ENCODE measurements at regions of chr3 and their contacts with region 1.

Region 1: GRCh38 chr3:15405448-15406050 is 21.8 kb downstream of the METTL6 start:
- DNase-seq: peak; percentile 69 to 71
- ATAC-seq: peak; percentile 73 to 90; a peak in 5 of 6 replicates
- H3K4me3 ChIP-seq: no peak overlapping the region
- H3K27ac ChIP-seq: no peak overlapping the region
- H3K4me1 ChIP-seq: no peaks in the 10 kb centered on the region
- CTCF ChIP-seq: peak; percentile 78
- EP300 ChIP-seq: no peak
- POLR2A ChIP-seq: no peak
- RAD21 ChIP-seq: peak; percentile 62 to 68

Region 2: GRCh38 chr3:15241341-15241740 is 164.2 kb before region 1 on chr3:
- CTCF ChIA-PET with region 1: no interaction called
- POLR2A ChIA-PET with region 1: no interaction called
- DNase-seq: peak; percentile 28 to 32
- ATAC-seq: peak; percentile 73 to 83; a peak in 5 of 6 replicates
- H3K4me3 ChIP-seq: no peak overlapping the region
- H3K27ac ChIP-seq: no peak overlapping the region
- H3K4me1 ChIP-seq: no peaks in the 10 kb centered on the region
- CTCF ChIP-seq: peak; percentile 23; the same call in 1 of the 3 replicates
- EP300 ChIP-seq: no peak
- POLR2A ChIP-seq: no peak
- RAD21 ChIP-seq: peak in 1 of 2 experiments; percentile 40; a peak in 2 of 5 replicates

Region 3: DNA sequence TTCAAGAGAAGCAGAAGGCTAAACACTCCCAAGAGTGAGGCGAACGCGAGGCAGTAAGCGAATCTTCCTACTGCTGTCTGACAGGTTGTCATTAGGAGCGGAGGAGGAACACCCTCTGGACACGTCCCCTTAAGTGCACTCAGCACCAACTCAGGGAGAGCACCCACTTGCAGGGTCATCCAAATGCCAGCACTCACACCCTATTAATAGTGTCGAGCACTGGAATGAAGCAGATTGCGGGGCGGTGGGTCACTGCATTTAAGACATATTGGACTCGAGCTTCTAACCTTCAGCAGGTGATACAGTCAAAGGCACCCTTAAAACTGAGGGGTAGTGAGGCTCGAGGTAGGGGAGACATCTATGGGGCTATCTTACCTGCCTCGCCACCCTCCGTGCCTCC is 101.8 kb before region 1 on chr3:
- CTCF ChIA-PET with region 1: no interaction called
- POLR2A ChIA-PET with region 1: no interaction called
- DNase-seq: no peak
- ATAC-seq: no peak
- H3K4me3 ChIP-seq: no peak overlapping the region
- H3K27ac ChIP-seq: no peak overlapping the region
- H3K4me1 ChIP-seq: peaks cover 20% of the 10 kb centered on the region
- CTCF ChIP-seq: no peak
- EP300 ChIP-seq: no peak
- POLR2A ChIP-seq: no peak
- RAD21 ChIP-seq: no peak

Region 4: GRCh38 chr3:15384510-15385237 is 20.9 kb before region 1 on chr3:
- CTCF ChIA-PET with region 1: interaction called, 20 read pairs
- POLR2A ChIA-PET with region 1: interaction called, 4 read pairs
- DNase-seq: no peak
- ATAC-seq: no peak
- H3K4me3 ChIP-seq: no peak overlapping the region
- H3K27ac ChIP-seq: no peak overlapping the region
- H3K4me1 ChIP-seq: no peaks in the 10 kb centered on the region
- CTCF ChIP-seq: no peak
- EP300 ChIP-seq: no peak
- POLR2A ChIP-seq: no peak
- RAD21 ChIP-seq: no peak

Region 5: GRCh38 chr3:15427182-15427880 is 21.8 kb after region 1 on chr3 and contains the starts of genes EAF1 and METTL6:
- CTCF ChIA-PET with region 1: interaction called, 11 read pairs
- POLR2A ChIA-PET with region 1: no interaction called
- DNase-seq: peak; percentile 85 to 94
- ATAC-seq: peak; percentile 97 to 99
- H3K4me3 ChIP-seq: peak within 1 kb of the TSS; percentile 84
- H3K27ac ChIP-seq: peak within 1 kb of the TSS; percentile 81 to 95
- H3K4me1 ChIP-seq: peaks cover 21% of the 10 kb centered on the region; the same call in 2 of the 3 replicates
- CTCF ChIP-seq: no peak
- EP300 ChIP-seq: no peak
- POLR2A ChIP-seq: peak; percentile 49
- RAD21 ChIP-seq: no peak
- polyA plus RNA-seq, gene EAF1: 18.6 and 20.7 TPM in 2 replicates
- polyA plus RNA-seq, gene METTL6: 37.4 and 42.7 TPM in 2 replicates

Measured in A549 (cell line).